Ascending aorta (tissue), 2 donors: ENCODE measurements at regions of chr10 and their contacts with region 1.

Region 1: GRCh38 chr10:5385224-5385623 is 19.4 kb downstream of the TUBAL3 start:
- DNase-seq: peak in 1 of 2 donors; percentile 30
- H3K4me3 ChIP-seq: no peak overlapping the region
- H3K27ac ChIP-seq: no peak overlapping the region
- H3K4me1 ChIP-seq: no peaks in the 10 kb centered on the region
- H3K27me3 ChIP-seq: no peaks in the 10 kb centered on the region
- CTCF ChIP-seq: no peak

Region 2: DNA sequence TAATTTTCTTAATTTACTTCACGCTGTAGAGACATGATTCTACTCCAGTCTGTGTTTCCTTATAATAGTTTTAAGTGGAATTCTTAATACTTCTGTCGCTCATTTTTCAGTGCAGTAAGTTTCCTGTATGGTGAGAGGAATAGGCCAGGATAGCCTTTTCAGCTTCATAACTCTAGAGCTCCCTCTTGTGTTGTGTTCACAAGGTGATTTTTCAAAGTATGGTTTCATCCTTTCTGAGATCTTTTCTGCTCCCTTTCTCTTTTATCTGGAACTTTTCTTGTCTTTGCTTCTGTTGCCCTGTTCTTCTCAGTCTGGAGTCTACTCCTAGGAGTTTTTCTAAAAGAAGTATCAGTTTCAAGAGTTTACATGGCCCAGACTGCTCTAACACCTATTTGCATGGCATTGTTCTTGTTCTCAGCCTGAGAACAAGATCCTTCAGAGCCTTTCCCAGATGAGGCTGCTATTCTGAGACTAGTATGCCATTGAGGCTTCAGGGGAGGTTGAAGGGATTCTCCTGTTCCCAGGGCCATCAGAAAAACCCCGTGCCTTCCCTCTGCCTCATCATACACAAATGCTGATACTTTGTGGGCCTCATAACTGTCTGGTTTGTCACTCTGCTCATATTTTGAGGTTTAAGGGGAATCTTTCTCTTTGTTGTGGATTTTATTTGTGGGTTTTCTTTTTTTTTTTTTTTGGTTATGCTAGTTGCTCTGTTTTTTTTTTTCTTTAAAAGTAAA is 49.0 kb after region 1 on chr10:
- intact Hi-C with region 1: loop called (anchors 5 kb)
- DNase-seq: no peak
- H3K4me3 ChIP-seq: peak overlapping the region in 1 of 2 donors; percentile 20
- H3K27ac ChIP-seq: peak overlapping the region; percentile 37 to 57
- H3K4me1 ChIP-seq: peaks cover 3 to 31% of the 10 kb centered on the region in 2 donors
- H3K27me3 ChIP-seq: no peaks in the 10 kb centered on the region
- CTCF ChIP-seq: peak; percentile 50 to 67 (median 50)